ENCODE measurements at regions of chr2 and their contacts with region 1.

Region 1: DNA sequence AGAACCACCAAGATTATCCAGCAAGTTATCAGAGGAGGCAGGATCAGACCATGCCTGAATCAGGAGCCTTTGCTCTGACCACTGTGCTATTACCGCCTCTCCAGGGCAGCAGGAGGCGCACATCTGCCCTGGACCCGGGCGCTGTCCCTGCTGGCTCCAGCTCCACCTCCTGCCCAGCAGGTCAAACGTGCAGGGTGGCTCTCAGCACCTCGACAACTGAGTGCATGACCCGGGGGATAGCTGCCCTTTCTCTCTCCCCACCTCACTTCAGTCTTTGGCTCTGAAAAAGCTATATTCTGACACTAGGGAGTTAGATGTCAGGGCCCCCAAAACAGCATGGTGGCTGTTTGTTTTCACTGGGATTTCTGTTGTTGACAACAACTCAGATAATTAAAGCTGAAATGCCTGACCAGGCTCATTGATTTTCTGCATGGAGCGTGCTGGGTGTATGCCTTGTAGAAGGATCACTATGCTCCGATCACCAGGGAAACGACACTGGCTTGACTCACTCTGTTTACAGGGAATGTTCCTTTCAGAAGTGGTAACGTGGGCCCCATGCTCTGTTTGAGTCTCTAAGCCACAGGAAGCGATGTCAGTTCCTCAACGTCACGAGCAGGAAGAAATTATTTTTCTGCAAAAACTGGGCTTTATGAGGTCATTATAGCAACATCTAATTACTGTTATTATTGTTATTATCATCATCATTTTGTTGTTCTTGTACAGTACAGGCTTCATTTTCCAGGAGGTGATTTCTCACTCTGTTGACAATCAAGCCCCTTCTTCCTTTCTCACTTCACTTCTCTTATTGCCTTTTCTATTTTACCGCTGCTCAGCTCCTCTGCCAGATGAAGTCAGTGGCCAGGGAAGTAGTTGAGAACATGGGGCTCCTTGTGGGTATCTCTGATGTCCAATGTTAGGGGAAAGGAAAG is 125.6 kb downstream of the PLB1 start:
- DNase-seq: peak; percentile 95
- H3K4me3 Mint-ChIP-seq: peak overlapping the region; percentile 65
- H3K27ac Mint-ChIP-seq: peak overlapping the region; percentile 97
- H3K4me1 Mint-ChIP-seq: peaks cover 88% of the 10 kb centered on the region
- H3K27me3 Mint-ChIP-seq: no peaks in the 10 kb centered on the region

Region 2: DNA sequence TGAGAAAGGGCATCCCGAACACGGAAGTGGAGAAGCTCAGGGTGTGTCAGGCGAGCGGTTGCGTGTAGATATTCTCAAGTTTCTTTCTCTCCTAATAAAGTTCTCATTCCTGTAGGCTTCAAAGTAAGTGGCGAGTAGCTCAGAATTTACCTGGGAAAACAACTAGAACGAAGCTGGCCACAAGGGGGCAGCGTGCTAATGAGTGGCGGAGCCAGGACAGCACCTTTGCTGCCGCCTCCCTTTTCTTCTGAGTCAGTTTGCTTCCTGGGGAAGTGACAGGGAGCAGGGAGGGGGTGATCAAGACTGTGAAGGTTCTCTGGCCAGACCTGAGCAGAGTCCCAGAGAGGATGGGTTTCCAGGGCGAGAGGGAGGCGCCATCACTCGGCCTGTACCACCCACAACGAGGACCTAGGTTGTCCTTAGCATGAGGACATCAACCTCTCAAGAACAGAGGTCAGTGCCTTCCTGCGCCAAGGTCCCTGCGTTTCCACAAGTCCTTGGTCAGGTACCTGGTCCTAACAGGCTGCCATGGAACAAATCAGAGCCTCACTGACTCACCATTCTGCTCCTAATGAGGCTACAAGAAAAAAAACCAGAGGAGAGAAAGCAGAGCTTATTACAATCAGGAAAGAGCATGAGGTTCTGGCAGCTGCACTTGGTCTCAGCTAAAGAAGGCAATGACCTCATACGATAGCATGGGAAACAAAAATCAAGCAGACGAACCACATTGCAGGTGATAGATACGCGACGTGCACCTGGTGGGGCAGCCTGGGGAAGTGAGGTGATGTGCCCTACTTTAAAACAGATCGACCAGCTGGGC is 26.9 kb before region 1 on chr2:
- intact Hi-C with region 1: loop called (anchors 5 kb)
- DNase-seq: peak; percentile 95
- H3K4me3 Mint-ChIP-seq: peak overlapping the region; percentile 50
- H3K27ac Mint-ChIP-seq: peak overlapping the region; percentile 84
- H3K4me1 Mint-ChIP-seq: peaks cover 18% of the 10 kb centered on the region
- H3K27me3 Mint-ChIP-seq: no peaks in the 10 kb centered on the region

Region 3: DNA sequence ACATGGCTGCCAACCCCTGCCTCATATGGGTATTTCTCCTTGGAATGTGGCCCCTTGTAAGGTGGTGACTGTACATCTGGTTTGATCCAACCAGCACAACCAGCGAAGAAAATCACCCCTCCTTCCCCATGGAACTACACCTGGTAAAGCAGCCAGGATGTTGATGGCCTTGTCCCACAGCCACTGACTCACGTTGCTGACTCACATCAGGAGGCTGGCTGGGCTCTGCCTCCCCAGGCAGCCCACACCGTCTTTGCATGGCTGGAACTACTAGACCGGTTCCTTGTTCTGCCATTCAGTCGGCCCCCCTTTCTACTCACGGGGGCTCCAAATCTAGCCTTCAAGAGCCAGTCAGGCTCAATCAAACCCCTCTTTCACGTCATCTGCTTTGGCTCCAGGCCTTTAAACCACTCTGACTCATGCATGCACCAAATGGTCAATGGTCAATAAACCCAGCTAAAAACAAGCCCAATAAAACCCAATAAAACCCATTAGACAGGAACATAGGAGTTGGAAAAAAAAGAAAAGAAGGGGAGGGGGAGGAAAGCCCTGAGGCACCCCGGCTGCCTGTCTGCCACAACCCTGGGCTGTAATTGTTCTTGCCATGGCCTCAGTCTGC is 10.7 kb before region 1 on chr2:
- intact Hi-C with region 1: loop called (anchors 1 kb)
- DNase-seq: peak; percentile 75
- H3K4me3 Mint-ChIP-seq: peak overlapping the region; percentile 28
- H3K27ac Mint-ChIP-seq: peak overlapping the region; percentile 65
- H3K4me1 Mint-ChIP-seq: peaks cover 29% of the 10 kb centered on the region
- H3K27me3 Mint-ChIP-seq: no peaks in the 10 kb centered on the region

Region 4: GRCh38 chr2:28649481-28650214 is 28.2 kb after region 1 on chr2:
- intact Hi-C with region 1: loop called (anchors 1 kb)
- DNase-seq: peak; percentile 65
- H3K4me3 Mint-ChIP-seq: peak overlapping the region; percentile 33
- H3K27ac Mint-ChIP-seq: peak overlapping the region; percentile 80
- H3K4me1 Mint-ChIP-seq: peaks cover 30% of the 10 kb centered on the region
- H3K27me3 Mint-ChIP-seq: no peaks in the 10 kb centered on the region

Region 5: DNA sequence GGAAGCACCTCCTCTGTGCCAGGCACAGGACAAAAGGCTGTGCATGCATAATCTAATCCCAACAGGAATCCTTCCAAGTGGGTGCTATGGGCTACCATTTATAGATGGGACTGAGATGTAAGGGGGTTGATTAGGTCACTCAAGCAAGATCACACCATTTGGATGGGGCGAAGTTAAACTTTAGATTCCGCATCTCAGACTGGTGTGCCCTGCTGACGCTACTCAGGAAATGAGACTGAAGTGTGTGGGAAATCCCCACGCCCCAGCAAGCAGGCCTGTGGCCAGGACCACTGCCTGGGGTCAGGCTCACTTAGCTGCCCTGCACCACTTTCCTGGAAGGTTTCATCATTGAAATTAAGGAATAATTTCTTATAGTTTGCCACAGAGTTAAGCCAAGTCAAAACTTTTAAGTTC is 59.7 kb after region 1 on chr2:
- intact Hi-C with region 1: loop called (anchors 1 kb)
- DNase-seq: peak; percentile 90
- H3K4me3 Mint-ChIP-seq: peak overlapping the region; percentile 73
- H3K27ac Mint-ChIP-seq: peak overlapping the region; percentile 97
- H3K4me1 Mint-ChIP-seq: peaks cover 60% of the 10 kb centered on the region
- H3K27me3 Mint-ChIP-seq: no peaks in the 10 kb centered on the region